CD4-positive, alpha-beta T cell (primary cell): ENCODE measurements at regions of chrX and their contacts with region 1.

Region 1: GRCh38 chrX:135384161-135384836 is 37.4 kb upstream of the SMIM10L2A start:
- DNase-seq: peak in 12 of 14 experiments; percentile 3 to 84 (median 22)
- ATAC-seq: peak; percentile 97
- H3K4me3 ChIP-seq: peak overlapping the region; percentile 30
- H3K4me3 Mint-ChIP-seq: peak overlapping the region; percentile 43
- H3K27ac ChIP-seq: no peak overlapping the region
- H3K27ac Mint-ChIP-seq: peak overlapping the region; percentile 88
- H3K4me1 ChIP-seq: peaks cover 31% of the 10 kb centered on the region
- H3K4me1 Mint-ChIP-seq: peaks cover 47% of the 10 kb centered on the region
- H3K27me3 ChIP-seq: no peaks in the 10 kb centered on the region
- H3K27me3 Mint-ChIP-seq: no peaks in the 10 kb centered on the region
- CTCF ChIP-seq: no peak

Region 2: GRCh38 chrX:135345107-135345589 is 39.2 kb before region 1 on chrX:
- CTCF ChIA-PET with region 1: no interaction called
- POLR2A ChIA-PET with region 1: no interaction called
- intact Hi-C with region 1: loop called in 1 of 2 experiments (anchors 2 kb)
- DNase-seq: peak in 1 of 14 experiments; percentile 1
- ATAC-seq: no peak
- H3K4me3 ChIP-seq: peak overlapping the region; percentile 91
- H3K4me3 Mint-ChIP-seq: peak overlapping the region; percentile 79
- H3K27ac ChIP-seq: no peak overlapping the region
- H3K27ac Mint-ChIP-seq: peak overlapping the region; percentile 59
- H3K4me1 ChIP-seq: peaks cover 37% of the 10 kb centered on the region
- H3K4me1 Mint-ChIP-seq: peaks cover 60% of the 10 kb centered on the region
- H3K27me3 ChIP-seq: no peaks in the 10 kb centered on the region
- H3K27me3 Mint-ChIP-seq: no peaks in the 10 kb centered on the region
- CTCF ChIP-seq: no peak